Activated naive CD4-positive, alpha-beta T cell treated with anti-CD3 and anti-CD28 coated beads for 36 hours (primary cell): ENCODE measurements at regions of chr9 and their contacts with region 1.

Region 1: GRCh38 chr9:136109351-136110081 is 9.2 kb downstream of the TMEM250 start:
- DNase-seq: peak; percentile 97
- H3K4me3 Mint-ChIP-seq: peak overlapping the region; percentile 83
- H3K27ac Mint-ChIP-seq: peak overlapping the region; percentile 97
- H3K4me1 Mint-ChIP-seq: peaks cover 74% of the 10 kb centered on the region
- H3K27me3 Mint-ChIP-seq: no peaks in the 10 kb centered on the region

Region 2: DNA sequence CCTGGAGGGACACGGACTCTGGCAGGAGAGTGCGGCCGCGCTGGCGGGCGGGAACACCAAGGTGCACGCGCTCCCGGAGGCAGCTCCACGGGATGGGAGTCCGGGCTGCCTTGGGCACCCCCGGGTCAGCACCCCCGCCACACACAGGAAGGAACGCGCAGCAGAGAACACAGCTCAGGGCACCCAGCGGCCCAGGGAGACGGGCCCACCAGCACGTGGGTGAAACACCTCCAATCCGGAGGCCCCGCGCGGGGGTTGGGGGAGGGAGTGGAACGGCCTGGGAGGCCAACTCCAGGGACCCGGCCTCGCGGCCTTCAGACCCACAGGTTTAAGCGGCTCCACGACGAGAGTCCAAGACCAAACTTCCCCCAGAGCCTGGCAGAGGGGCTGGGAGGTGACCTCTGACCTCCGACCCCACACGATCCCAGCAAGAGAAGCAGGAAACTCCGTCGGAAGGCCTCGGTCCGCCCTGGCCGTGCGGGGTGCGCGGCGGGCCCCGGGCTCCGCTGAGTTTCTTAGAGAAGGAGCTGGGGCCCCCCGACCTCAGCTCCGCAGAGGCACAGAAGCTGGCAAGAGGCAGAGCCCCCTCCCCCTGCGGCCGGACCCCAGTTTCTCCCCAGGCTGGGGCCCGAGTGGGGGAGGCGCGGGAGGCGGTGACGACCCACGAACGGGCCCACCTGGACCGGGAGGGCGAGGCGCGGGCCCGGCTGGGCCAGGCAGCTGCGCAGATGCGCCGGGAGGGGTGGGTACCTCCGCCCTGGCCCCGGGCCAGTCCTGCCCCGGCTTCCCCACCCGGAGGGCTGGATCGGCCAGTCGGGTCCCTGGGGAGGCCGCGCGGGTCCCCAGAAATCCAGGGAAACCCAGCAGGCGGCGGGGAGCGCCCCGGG is 15.3 kb before region 1 on chr9:
- CTCF ChIA-PET with region 1: interaction called, 4 read pairs
- intact Hi-C with region 1: loop called (anchors 1 kb)
- DNase-seq: peak; percentile 64
- H3K4me3 Mint-ChIP-seq: peak overlapping the region; percentile 67
- H3K27ac Mint-ChIP-seq: no peak overlapping the region
- H3K4me1 Mint-ChIP-seq: peaks cover 17% of the 10 kb centered on the region
- H3K27me3 Mint-ChIP-seq: no peaks in the 10 kb centered on the region

Region 3: DNA sequence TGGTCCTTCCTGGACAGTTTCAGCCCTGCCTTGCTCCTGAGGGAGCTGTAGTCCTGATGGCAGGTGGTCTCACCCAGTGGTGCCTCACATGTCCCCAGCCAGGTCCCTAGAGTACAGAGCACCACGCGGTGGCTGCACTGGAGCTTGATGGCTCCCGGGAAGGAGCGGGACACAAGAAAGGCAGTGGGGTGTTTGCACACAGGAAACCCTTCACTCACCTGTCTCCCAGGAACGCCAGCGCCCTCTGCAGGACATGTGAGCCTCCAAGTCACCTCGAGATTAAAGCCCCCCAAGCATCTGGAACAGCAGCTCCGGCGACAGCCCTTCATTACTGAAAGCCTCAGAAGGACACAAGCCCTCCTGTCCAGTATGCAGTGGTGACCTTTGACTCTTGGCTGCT is 29.1 kb after region 1 on chr9:
- CTCF ChIA-PET with region 1: no interaction called
- intact Hi-C with region 1: no loop called
- DNase-seq: peak; percentile 75
- H3K4me3 Mint-ChIP-seq: no peak overlapping the region
- H3K27ac Mint-ChIP-seq: no peak overlapping the region
- H3K4me1 Mint-ChIP-seq: peaks cover 4% of the 10 kb centered on the region
- H3K27me3 Mint-ChIP-seq: peaks cover 27% of the 10 kb centered on the region

Region 4: DNA sequence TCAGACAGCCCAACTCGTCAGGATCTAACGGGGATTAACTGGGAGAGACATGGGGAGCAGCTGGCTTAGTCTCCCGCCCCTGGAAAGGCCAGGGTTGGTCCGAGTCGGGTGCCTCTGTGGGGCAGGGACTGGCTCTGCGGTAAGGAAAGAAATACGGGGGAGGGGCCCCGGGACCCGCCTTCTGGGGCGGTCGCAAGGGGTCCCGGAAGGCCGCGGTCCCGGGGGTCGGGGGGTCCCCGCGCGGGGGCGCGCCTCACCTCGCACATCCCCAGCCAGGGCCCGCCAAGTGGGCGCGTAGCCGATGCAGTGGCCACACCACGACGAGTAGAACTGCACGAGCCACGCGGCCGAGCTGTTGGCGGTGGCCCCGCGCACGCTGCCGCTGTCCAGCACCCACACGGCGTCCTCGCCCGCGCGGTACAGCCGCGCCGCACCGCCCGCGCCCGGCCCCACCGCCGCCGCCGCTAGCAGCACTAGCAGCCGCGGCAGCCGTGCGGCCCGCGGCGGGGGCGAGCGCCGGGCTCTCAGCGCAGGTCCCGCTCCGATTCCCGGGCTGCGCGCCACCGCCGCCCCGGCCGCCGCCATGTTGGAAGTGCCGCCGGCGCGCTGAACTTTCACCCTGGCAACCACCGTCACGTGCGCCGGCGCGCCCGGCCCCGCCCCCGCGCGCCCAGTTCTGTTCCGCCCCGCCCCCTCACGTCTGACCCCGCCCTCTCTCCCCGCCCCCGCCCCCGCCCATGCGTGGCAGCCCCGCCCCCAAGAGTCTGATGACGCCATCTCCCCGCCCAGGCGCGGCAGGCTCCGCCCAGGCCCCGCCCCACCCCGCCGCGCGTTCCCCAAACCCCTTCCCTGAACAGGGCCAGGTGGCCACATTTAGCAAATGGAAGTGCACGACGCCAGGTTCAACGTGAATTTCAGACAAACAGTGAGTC is 136.0 kb after region 1 on chr9 and contains the start of gene QSOX2:
- CTCF ChIA-PET with region 1: no interaction called
- intact Hi-C with region 1: no loop called
- DNase-seq: peak; percentile 85
- H3K4me3 Mint-ChIP-seq: peak within 1 kb of the TSS; percentile 92
- H3K27ac Mint-ChIP-seq: peak within 1 kb of the TSS; percentile 88
- H3K4me1 Mint-ChIP-seq: peaks cover 35% of the 10 kb centered on the region
- H3K27me3 Mint-ChIP-seq: no peaks in the 10 kb centered on the region
- total RNA-seq, gene QSOX2: 17.7 to 18.0 TPM

Region 5: DNA sequence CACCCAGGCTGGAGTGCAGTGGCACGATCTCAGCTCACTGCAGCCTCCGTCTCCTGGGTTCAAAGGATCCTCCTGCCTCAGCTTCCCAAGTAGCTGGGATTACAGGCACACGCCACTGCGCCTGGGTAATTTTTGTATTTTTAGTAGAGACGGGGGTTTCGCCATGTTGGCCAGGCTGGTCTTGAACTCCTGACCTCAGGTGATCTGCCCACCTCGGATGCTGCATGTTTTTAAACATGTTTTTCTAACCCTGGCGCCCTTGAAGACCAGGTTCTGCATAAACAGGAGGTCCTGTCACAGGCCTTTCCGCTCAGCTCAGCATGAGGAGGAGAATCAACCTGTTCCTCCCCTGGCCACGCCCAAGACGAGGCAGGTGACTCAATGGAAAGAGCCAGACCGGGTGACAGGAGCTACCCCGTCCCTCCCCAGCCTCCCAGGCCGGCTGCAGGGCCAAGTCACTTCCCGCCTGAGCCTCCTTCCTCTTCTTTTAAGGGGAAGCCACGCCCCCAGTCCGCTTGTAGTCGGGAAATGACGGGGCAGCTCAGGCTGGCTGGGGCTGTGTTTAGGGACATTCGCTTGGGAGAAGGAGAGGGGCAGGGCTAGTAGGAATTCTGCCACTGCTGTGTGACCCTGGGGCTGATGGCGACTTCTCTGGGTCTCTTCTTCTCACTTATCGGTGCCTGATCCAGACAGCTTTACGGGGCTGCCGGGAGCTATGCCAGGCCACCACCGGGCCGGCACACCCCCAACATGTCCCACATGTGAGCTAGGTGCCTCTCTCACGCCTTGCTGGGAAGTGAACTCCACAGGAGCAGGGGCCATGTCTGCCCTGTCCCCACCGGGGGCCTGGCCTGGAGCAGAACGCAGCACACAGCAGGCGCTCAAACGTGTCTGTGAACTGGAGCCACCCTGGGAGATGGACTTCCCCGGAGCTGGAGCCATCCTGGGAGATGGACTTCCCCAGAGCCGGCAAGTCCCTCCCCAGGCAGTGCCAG is 430.2 kb after region 1 on chr9:
- CTCF ChIA-PET with region 1: no interaction called
- intact Hi-C with region 1: loop called (anchors 5 kb)
- DNase-seq: peak; percentile 99
- H3K4me3 Mint-ChIP-seq: peak overlapping the region; percentile 80
- H3K27ac Mint-ChIP-seq: peak overlapping the region; percentile 100
- H3K4me1 Mint-ChIP-seq: peaks cover 70% of the 10 kb centered on the region
- H3K27me3 Mint-ChIP-seq: no peaks in the 10 kb centered on the region